CD8-positive, alpha-beta T cell (primary cell): ENCODE measurements at regions of chr2 and their contacts with region 1.

Region 1: GRCh38 chr2:70919672-70920366 is 15.9 kb upstream of the ATP6V1B1 start:
- DNase-seq: peak; percentile 39 to 80 (median 71)
- ATAC-seq: peak; percentile 61
- H3K4me3 ChIP-seq: no peak overlapping the region
- H3K4me3 Mint-ChIP-seq: no peak overlapping the region
- H3K27ac ChIP-seq: no peak overlapping the region
- H3K27ac Mint-ChIP-seq: no peak overlapping the region
- H3K4me1 ChIP-seq: no peaks in the 10 kb centered on the region
- H3K4me1 Mint-ChIP-seq: no peaks in the 10 kb centered on the region
- H3K27me3 ChIP-seq: peaks cover 0 to 3% of the 10 kb centered on the region in 2 experiments
- H3K27me3 Mint-ChIP-seq: peaks cover 34% of the 10 kb centered on the region
- CTCF ChIP-seq: peak; percentile 86

Region 2: GRCh38 chr2:70789304-70790135 is 130.3 kb before region 1 on chr2:
- CTCF ChIA-PET with region 1: interaction called, 11 read pairs
- POLR2A ChIA-PET with region 1: no interaction called
- intact Hi-C with region 1: loop called (anchors 1 to 2 kb)
- DNase-seq: peak; percentile 30 to 78 (median 67)
- ATAC-seq: peak; percentile 73
- H3K4me3 ChIP-seq: peak overlapping the region; percentile 32 to 36
- H3K4me3 Mint-ChIP-seq: peak overlapping the region; percentile 82
- H3K27ac ChIP-seq: no peak overlapping the region
- H3K27ac Mint-ChIP-seq: no peak overlapping the region
- H3K4me1 ChIP-seq: peaks cover 8% of the 10 kb centered on the region
- H3K4me1 Mint-ChIP-seq: peaks cover 13% of the 10 kb centered on the region
- H3K27me3 ChIP-seq: peaks cover 7 to 11% of the 10 kb centered on the region in 2 experiments
- H3K27me3 Mint-ChIP-seq: peaks cover 51% of the 10 kb centered on the region
- CTCF ChIP-seq: peak; percentile 54

Region 3: GRCh38 chr2:71417300-71418202 is 497.7 kb after region 1 on chr2:
- CTCF ChIA-PET with region 1: no interaction called
- POLR2A ChIA-PET with region 1: no interaction called
- intact Hi-C with region 1: no loop called
- DNase-seq: peak in 3 of 9 experiments; percentile 32 to 64 (median 39)
- ATAC-seq: peak; percentile 71
- H3K4me3 ChIP-seq: peak overlapping the region in 1 of 2 experiments; percentile 50
- H3K4me3 Mint-ChIP-seq: peak overlapping the region; percentile 87
- H3K27ac ChIP-seq: peak overlapping the region; percentile 2 to 86
- H3K27ac Mint-ChIP-seq: peak overlapping the region; percentile 93
- H3K4me1 ChIP-seq: peaks cover 6% of the 10 kb centered on the region
- H3K4me1 Mint-ChIP-seq: peaks cover 15% of the 10 kb centered on the region
- H3K27me3 ChIP-seq: no peaks in the 10 kb centered on the region
- H3K27me3 Mint-ChIP-seq: no peaks in the 10 kb centered on the region
- CTCF ChIP-seq: no peak